Aorta (tissue), 5 donors: ENCODE measurements at regions of chr5 and their contacts with region 1.

Region 1: DNA sequence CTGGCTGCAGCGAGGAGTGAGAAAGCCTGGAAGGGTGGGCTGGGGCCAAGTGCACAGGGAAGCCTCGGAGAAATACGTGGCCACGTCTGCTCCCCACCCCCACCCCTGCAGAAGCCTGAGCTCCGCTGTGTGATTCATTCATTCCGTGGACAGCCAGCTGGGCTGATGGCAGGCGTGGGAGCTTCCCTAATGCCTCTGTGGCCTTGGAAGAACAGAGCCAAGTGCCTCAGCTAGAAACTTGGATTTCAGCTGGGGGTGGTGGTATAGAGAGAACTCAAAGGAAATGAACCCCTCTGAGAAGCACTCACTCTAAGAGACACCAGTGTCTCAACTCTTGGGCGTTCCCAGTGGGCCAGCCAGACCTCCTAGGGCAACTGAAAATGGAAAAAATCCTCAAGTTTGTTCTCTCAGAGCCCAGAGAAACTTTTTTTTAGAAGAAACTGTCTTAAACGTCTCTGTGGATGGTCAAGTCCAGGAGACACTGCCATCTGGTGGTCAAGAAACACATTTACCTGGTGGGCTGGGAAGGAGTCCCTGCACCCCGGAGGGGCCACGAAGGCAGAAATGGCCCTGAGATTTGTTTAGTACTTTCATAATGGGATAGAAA is 18.0 kb downstream of the ATOX1 start:
- DNase-seq: peak; percentile 83 to 89
- ATAC-seq: peak; percentile 90
- H3K4me3 ChIP-seq: no peak overlapping the region
- H3K27ac ChIP-seq: peak overlapping the region; percentile 64 to 73
- H3K4me1 ChIP-seq: peaks cover 0 to 4% of the 10 kb centered on the region in 2 donors
- H3K27me3 ChIP-seq: no peaks in the 10 kb centered on the region

Region 2: GRCh38 chr5:151447174-151448037 is 293.0 kb before region 1 on chr5 and contains the start of gene SLC36A1:
- intact Hi-C with region 1: loop called (anchors 2 to 5 kb)
- DNase-seq: peak; percentile 97 to 99
- ATAC-seq: peak; percentile 99
- H3K4me3 ChIP-seq: peak within 1 kb of the TSS; percentile 51 to 65
- H3K27ac ChIP-seq: no peak within 1 kb of the TSS
- H3K4me1 ChIP-seq: no peaks in the 10 kb centered on the region
- H3K27me3 ChIP-seq: no peaks in the 10 kb centered on the region
- total RNA-seq, gene SLC36A1: 13.6 to 19.0 TPM

Region 3: GRCh38 chr5:151492729-151493128 is 247.7 kb before region 1 on chr5:
- intact Hi-C with region 1: loop called in 1 of 2 experiments (anchors 10 kb)
- DNase-seq: peak in 1 of 2 donors; percentile 75
- ATAC-seq: no peak
- H3K4me3 ChIP-seq: no peak overlapping the region
- H3K27ac ChIP-seq: no peak overlapping the region
- H3K4me1 ChIP-seq: no peaks in the 10 kb centered on the region
- H3K27me3 ChIP-seq: no peaks in the 10 kb centered on the region

Region 4: DNA sequence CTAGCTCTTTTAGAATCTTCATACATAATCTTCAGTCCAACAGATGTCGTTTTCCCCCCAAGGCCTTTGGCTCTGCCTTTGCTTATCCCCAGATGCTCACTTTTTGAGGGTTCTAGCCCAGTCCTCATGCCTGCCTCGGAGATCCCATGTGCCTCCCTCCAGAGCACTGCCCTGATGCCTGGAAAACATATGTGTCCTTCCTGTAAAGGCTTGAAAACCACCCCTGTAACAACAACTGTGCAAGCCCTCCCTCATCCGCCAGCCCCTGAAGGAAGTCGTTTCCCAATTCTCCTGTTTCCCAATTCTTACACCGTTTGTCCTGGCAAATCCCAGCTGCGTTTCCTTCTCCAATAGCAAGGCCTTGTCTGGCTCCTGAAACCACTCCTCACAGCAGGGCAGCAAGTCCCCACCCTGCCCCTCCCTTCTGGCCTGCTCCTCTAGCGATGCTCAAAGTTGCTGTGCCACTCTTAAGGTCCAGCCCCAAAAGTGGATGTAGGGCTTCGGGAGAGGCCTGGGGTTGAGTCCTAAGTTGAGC is 240.9 kb before region 1 on chr5:
- intact Hi-C with region 1: loop called (anchors 5 to 10 kb)
- DNase-seq: no peak
- ATAC-seq: no peak
- H3K4me3 ChIP-seq: no peak overlapping the region
- H3K27ac ChIP-seq: no peak overlapping the region
- H3K4me1 ChIP-seq: no peaks in the 10 kb centered on the region
- H3K27me3 ChIP-seq: no peaks in the 10 kb centered on the region

Region 5: GRCh38 chr5:151659001-151659754 is 81.3 kb before region 1 on chr5:
- intact Hi-C with region 1: loop called (anchors 1 kb)
- DNase-seq: peak; percentile 89 to 94
- ATAC-seq: peak; percentile 93
- H3K4me3 ChIP-seq: no peak overlapping the region
- H3K27ac ChIP-seq: no peak overlapping the region
- H3K4me1 ChIP-seq: no peaks in the 10 kb centered on the region
- H3K27me3 ChIP-seq: no peaks in the 10 kb centered on the region

Region 6: GRCh38 chr5:151670083-151670686 is 70.3 kb before region 1 on chr5:
- intact Hi-C with region 1: no loop called
- DNase-seq: no peak
- ATAC-seq: no peak
- H3K4me3 ChIP-seq: no peak overlapping the region
- H3K27ac ChIP-seq: peak overlapping the region; percentile 62 to 87
- H3K4me1 ChIP-seq: peaks cover 8 to 9% of the 10 kb centered on the region in 2 donors
- H3K27me3 ChIP-seq: no peaks in the 10 kb centered on the region

Region 7: DNA sequence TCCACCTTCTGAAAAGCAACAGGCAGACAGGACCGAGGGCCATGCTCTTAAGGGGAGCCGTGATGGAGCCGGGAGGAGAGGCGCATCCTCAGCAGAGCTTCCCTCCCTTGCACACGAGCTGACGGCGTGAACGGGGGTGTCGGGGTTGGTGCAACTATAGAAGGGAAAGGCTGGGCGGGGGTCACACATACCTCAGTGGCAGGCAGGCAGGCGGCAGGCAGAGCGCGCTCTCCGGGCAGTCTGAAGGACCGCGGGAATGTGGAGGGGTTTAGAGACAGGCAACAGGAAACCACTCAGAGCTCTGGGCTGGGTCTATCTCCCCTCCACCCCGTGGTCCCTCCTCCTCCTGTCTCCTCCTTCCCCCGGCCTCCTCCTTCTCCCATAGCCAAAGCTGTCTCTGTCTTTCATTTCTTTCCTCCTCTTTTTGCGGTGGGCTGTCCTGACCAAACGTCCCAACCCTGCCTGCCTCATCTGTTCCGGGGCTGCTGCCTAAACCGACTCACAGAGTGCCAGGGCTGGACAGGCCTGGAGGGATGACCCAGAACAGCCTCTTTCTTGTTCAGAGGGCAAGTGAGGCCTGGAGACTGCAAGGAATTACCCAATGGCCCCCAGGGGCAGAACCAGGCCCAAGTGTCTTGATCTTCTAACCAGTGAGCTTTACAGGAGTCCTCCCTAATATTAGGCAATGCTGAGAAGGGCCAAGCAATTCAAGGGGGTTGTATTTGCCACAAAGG is 53.6 kb before region 1 on chr5 and contains the start of gene SPARC:
- intact Hi-C with region 1: loop called in 1 of 2 experiments (anchors 2 kb)
- DNase-seq: peak; percentile 88 to 91
- ATAC-seq: peak; percentile 92
- H3K4me3 ChIP-seq: peak within 1 kb of the TSS; percentile 60 to 91
- H3K27ac ChIP-seq: peak within 1 kb of the TSS; percentile 78 to 90
- H3K4me1 ChIP-seq: peaks cover 8 to 13% of the 10 kb centered on the region in 2 donors
- H3K27me3 ChIP-seq: no peaks in the 10 kb centered on the region
- total RNA-seq, gene SPARC: 2,087 to 2,608 TPM